ENCODE measurements at regions of chr11 and their contacts with region 1.

Region 1: DNA sequence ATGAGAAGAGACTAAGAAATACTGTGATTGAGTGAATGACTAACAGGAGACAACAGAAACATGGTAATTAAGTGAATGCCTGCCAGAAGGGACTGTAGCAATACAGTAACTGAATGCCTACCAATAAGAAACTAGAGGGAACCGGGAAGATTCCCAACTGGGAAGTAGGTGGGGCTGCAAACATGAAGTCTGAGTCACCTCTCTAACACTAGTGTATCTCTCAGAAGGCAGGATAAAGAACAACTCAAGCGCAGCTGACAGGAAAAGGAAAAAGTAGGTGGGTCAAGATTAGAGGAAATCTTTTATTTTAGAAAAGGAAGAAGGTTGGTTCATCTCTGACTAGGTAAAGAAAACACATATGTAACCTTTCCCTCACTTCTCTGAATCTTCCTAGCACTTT is 14.0 kb downstream of the C11orf42 start:
- DNase-seq: peak; percentile 89
- ATAC-seq: peak; percentile 99
- H3K4me3 ChIP-seq: no peak overlapping the region
- H3K27ac ChIP-seq: peak overlapping the region; percentile 69
- H3K4me1 ChIP-seq: peaks cover 22% of the 10 kb centered on the region
- H3K27me3 ChIP-seq: no peaks in the 10 kb centered on the region
- CTCF ChIP-seq: no peak

Region 2: GRCh38 chr11:6234387-6235107 is 15.2 kb after region 1 on chr11 and contains the start of gene FHIP1B:
- CTCF ChIA-PET with region 1: no interaction called
- POLR2A ChIA-PET with region 1: no interaction called
- intact Hi-C with region 1: loop called (anchors 1 kb)
- DNase-seq: peak; percentile 99
- ATAC-seq: peak; percentile 95
- H3K4me3 ChIP-seq: peak within 1 kb of the TSS; percentile 91
- H3K27ac ChIP-seq: peak within 1 kb of the TSS; percentile 52
- H3K4me1 ChIP-seq: peaks cover 11% of the 10 kb centered on the region
- H3K27me3 ChIP-seq: no peaks in the 10 kb centered on the region
- CTCF ChIP-seq: no peak
- total RNA-seq, gene FHIP1B: 23.3 and 30.4 TPM in 2 replicates

Region 3: GRCh38 chr11:6911948-6912347 is 692.6 kb after region 1 on chr11:
- CTCF ChIA-PET with region 1: no interaction called
- POLR2A ChIA-PET with region 1: no interaction called
- intact Hi-C with region 1: no loop called
- DNase-seq: peak; percentile 39
- ATAC-seq: no peak
- H3K4me3 ChIP-seq: no peak overlapping the region
- H3K27ac ChIP-seq: no peak overlapping the region
- H3K4me1 ChIP-seq: no peaks in the 10 kb centered on the region
- H3K27me3 ChIP-seq: no peaks in the 10 kb centered on the region
- CTCF ChIP-seq: no peak